ENCODE measurements at regions of chr17 and their contacts with region 1.

Region 1: DNA sequence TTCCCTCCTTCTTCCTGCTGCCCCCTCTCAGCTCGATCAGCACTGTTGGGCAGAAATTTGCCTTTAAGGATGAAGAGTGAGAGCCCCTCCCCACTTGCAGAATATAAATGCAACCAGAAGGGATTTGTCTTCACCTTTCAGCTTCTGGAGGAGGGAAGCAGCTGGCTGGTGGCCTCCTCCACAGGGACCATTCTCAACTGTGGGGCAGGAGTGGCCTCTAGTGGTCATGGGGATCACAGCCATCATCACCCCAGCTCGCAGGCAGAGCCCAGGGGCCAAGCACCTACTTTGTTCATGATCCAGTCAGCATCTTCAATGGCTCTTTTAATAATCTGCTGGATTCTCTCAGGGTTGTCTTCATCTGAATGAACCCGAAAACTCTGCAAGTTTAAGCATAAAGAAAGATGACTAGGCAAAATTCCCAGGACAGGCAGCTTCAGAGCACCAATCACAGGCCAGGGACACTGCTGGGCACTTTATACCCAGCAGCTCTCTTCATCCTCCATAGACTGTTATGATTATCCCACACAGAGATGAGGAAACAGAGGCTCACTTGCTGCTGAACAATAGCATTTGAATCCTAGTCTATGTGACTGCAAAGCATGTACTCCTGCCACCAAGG is 13.1 kb downstream of the LYRM9 start:
- DNase-seq: peak; percentile 68 to 86 (median 80)
- H3K4me3 ChIP-seq: no peak overlapping the region
- H3K27ac ChIP-seq: peak overlapping the region in 54 of 59 donors; percentile 24 to 87 (median 70)
- H3K27me3 ChIP-seq: no peaks in the 10 kb centered on the region
- CTCF ChIP-seq: peak; percentile 40 to 97 (median 87)

Region 2: DNA sequence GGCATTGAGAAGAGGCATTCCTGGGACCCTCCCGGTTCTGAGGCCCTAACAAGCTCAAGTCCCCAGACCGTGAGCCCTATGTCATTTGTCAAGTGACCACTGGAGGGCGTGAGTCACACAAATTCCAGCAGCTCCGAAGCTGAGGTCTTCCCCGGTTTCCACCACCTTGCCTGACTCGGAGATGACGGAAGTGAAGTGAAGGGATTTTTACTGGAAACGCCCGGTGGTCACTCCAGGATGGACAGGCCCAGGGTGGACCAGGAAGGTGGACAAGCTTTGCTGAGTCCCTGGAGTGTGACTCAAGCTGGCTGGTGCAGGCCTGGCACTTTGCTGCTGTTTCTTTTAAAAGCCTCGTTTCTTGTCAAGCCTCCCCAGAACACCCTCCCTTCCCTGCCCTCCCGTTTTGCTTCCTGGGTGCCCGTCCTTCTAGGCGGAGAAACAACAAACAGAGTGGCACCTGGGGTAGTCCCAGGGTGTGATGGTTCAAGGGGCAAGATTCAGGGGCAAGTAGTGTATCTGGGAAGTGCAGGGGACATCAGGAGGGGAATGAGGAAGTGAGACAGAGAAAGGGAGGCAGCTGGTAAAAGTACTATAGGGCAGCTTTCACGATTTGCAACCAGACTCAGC is 74.5 kb before region 1 on chr17:
- intact Hi-C with region 1: loop called (anchors 1 to 2 kb)
- DNase-seq: peak; percentile 60 to 90 (median 84)
- H3K4me3 ChIP-seq: peak overlapping the region in 57 of 59 donors; percentile 24 to 64 (median 45)
- H3K27ac ChIP-seq: peak overlapping the region in 28 of 59 donors; percentile 1 to 81 (median 39)
- H3K27me3 ChIP-seq: no peaks in the 10 kb centered on the region
- CTCF ChIP-seq: peak; percentile 65 to 94 (median 88)

Measured in dorsolateral prefrontal cortex (tissue), 120 donors.